Astrocyte of the cerebellum (primary cell): ENCODE measurements at regions of chr9 and their contacts with region 1.

Region 1: DNA sequence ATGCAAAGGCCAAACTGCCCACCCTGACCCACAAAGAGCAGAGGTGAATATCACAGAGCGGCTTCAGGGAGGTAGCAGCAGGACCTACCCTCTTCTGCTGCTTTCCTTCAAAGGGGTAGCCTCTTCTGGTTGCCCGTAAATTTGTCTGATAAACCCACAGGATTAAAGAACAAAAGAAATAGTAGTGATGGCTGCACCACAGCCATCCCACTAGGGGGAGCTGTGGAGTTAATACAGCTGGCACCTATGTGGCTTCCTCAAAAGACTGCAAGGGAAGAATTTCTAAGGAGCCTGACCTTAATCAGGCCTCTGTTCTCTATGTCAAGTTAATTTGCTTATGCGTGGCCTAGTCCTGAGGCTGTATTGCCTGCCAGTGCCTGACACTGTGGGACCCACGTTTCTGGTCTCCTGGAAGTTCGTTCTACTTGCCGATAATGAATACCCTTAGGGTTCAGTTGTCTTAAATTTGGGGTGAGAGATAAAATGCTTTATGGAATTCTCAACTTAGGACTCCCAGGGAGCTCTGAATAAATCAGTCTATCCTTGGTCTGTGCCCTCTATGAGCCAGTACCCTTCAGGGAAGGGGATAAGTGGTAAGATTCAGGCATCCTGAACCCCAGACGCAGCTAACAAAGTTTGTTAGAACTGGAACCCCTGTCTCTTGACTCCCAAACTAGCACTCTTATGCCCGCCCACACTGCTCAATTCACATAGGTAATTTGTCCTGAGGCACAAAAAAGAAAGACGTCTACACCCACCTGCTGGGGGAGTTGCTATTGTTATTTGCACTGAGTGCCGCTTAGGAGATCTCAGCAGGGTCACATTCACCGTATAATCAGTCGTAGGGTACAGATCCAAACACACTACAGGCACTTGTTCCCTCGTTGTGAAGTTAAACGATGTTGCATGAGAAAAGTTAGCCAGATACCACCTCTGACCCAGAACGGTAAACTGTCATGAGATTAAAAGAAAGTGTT is 77.1 kb downstream of the SUSD1 start:
- DNase-seq: peak; percentile 67
- H3K4me3 ChIP-seq: no peak overlapping the region
- CTCF ChIP-seq: peak; percentile 85

Region 2: DNA sequence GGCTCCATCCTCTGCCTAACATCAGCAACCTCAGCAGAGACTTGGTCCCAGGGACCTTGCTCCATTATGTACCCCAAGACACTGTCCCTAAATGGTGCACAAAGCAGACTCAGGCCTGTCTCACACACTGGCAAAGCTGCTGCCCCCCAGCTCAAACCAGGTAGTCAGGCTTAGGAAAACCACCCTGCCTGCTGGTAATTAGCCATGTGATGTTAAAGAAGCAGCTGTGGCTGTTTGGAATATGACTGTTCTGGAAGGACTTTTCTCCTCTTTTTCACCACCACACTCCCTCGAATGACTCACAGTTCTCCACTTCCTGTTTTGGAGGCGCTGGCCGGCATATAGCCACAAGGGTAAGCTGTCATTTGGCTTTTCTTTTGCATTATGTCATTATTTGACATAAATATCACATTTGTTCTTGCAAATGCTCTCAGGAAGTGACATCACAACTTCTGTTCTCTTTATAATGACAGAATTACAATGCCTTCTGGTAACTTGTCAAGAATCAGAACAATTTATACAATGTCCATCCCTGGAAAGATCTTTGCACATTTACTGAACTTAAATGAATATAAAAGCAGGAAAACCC is 36.8 kb before region 1 on chr9:
- in situ Hi-C with region 1: no loop called
- DNase-seq: peak; percentile 95
- H3K4me3 ChIP-seq: no peak overlapping the region
- CTCF ChIP-seq: no peak

Region 3: GRCh38 chr9:112140936-112141335 is 42.9 kb after region 1 on chr9:
- in situ Hi-C with region 1: no loop called
- DNase-seq: no peak
- H3K4me3 ChIP-seq: no peak overlapping the region
- CTCF ChIP-seq: no peak

Region 4: DNA sequence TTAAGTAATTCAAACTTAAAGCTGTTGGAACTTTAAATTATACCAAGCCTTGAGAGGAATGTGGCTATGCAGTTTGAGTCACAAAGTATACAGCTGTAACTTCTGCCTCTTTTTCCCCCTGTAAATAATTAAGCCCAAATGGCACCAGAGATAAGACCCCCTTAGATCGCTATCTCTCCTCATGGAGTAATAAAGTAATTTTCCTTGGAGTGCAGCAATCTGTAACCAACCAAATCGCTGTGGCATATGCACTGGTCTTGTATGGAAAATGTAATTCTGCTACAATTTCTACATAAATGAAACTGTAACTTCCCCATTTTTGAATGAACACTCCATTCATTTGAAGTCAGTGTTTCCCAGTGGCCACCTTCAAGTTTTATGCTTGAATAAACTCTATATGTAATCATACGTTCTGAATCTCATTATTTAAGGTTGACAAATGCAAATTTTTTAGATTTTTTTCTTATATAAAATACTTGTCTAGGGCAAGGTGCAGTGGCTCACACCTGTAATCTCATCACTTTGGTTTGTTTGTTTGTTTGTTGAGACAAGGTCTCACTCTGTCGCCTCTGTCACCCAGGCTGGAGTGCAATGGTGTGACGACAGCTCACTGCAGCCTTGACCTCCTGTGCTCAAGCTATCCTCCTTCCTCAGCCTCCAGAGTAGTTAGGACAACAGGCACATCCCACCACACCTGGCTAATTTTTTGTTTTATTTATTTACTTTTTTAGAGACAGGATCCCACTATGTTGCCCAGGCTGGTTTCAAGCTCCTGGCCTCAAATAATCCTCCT is 64.8 kb after region 1 on chr9:
- in situ Hi-C with region 1: no loop called
- DNase-seq: no peak
- H3K4me3 ChIP-seq: no peak overlapping the region
- CTCF ChIP-seq: no peak

Region 5: DNA sequence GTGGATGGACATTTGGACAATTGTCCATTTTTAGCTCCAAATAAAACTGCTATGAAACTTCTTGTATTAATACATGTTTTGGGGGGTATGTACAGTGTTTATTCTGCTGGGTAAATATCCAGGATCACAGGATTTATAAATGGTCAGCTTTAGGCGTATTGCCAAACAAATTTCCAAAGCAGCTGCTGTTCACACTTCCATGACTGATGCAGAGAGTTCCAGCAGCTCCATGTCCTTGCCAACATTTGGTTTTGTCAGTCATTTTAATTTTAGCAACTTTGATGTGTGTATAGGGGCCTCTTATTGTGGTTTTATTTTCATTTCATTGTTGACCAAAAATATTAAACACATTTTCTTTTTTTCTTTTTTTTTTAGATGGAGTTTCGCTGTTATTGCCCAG is 86.9 kb after region 1 on chr9:
- in situ Hi-C with region 1: no loop called
- DNase-seq: no peak
- H3K4me3 ChIP-seq: no peak overlapping the region
- CTCF ChIP-seq: no peak

Region 6: DNA sequence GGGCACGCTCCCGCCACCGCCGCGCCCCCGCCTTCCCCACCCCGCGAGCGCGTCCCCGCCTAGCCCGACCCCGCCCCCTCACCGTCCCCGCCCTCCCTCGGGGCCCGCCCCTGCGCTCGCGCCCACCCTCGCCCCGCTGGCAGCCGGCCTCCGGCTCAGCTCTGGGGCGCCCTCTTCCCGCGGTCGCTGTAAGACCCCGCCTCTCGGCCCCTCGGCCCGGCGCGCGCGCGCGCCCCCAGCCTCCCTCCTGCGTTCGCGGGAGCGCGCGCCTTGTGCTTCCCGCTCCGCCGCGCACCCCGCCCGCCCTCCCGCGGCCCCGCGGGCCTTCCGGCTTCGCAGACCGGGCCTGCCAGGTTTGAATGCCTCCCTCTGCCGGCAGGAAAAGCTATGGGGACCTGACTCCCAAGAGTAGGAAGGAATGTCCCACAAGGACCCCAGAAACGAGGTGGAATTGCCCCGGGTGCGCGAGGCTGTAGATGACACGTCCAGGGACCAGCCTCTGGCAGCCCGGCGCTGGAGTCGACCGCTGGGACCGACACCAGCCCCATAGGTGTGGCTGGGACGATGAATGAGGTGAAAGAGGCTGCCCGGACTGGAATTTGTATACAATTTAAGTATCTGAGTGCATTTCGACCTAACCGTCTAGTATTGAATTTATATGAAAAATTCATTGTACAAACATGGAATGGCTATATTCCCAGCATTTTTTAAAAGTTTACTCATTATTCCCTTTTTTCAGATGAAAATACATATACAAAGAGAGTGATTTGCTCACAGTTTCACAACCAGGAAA is 235.8 kb after region 1 on chr9:
- in situ Hi-C with region 1: loop called (anchors 5 kb)
- DNase-seq: peak; percentile 87
- H3K4me3 ChIP-seq: peak overlapping the region; percentile 69
- CTCF ChIP-seq: peak; percentile 52

Region 7: GRCh38 chr9:112717661-112718341 is 619.8 kb after region 1 on chr9 and contains the start of gene INIP:
- in situ Hi-C with region 1: loop called (anchors 10 kb)
- DNase-seq: peak; percentile 77
- H3K4me3 ChIP-seq: peak within 1 kb of the TSS; percentile 80
- CTCF ChIP-seq: no peak